Activated T-helper 2 cell treated with anti-CD3 and anti-CD28 coated beads, Interferon-gamma antibody, Interleukin-2, Interleukin-4, amounts not matched to agents 10 μg/mL and 5 μg/mL and 100 μg/mL, durations not matched to agents 14 hours and 24 hours and 36 hours (primary cell): ENCODE measurements at regions of chr14 and their contacts with region 1.

Region 1: DNA sequence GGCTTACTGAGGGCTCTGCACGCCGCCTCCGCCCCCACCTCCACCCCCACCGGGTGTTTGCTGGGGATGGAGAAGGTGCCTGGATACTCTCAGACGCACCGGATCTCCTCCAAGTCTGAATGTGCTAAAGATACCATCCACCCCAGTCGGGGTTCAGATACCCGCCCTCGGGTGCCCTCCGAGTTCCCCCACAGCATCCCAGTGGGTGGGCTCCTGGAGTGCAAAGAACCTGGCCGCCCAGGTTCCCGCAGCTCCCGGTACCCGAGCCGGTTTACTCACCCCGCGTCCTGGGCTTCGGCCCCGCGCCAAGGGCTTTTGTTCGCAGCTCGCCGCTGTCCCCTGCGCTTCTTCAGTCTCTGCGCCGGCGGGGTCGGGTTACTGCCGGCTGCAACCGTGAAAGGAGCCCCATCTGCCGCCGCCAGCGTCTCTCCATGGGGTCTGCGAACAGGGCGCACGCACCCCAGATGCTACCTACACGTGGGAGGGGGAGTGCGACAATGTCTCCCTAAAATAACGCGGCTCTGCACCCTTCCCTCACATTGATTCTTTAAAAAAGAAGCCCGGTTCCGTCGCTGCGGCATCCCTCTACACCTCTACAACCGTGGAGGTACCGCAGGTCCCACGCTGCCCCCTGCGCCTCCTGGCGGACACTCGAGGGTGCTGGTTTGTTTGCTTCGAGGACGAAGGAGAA is at the start of gene CCDC177:
- DNase-seq: peak; percentile 60
- H3K4me3 Mint-ChIP-seq: peak within 1 kb of the TSS; percentile 71
- H3K27ac Mint-ChIP-seq: no peak within 1 kb of the TSS
- H3K4me1 Mint-ChIP-seq: peaks cover 9% of the 10 kb centered on the region
- H3K27me3 Mint-ChIP-seq: peaks cover 60% of the 10 kb centered on the region
- total RNA-seq, gene CCDC177: 0.05 TPM in 1 of 2 replicates, not detected in the other

Region 2: DNA sequence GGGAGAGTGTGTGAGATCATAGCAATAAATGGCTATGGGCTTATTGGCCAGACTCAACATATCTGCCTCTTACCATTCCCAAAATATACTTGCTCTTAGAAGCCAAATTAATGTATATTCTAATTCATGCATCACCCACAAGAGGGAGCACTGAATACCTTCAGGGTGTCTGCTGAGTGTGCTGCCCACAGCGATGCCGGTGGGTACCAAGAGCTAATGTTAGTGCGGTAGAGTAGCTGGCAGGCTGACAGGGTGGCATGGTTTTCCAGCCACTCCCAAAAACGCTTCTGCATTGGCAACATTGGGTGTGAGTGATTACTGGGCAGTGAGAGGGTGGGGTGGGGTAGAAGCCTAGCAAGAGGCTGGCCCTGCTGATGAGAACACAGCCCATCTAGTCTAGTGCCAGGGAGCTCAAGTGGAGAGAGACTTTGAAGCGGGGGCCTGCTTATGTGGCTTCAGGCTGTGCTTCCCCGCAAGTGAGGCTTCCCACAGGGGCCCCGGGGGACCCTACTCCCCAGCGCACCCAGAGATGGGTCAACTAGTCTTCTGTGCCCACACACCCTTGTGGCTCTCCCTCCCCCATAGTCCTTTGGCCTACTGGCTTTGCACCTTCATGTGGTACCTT is 99.1 kb before region 1 on chr14:
- intact Hi-C with region 1: loop called (anchors 10 kb)
- DNase-seq: no peak
- H3K4me3 Mint-ChIP-seq: no peak overlapping the region
- H3K27ac Mint-ChIP-seq: no peak overlapping the region
- H3K4me1 Mint-ChIP-seq: no peaks in the 10 kb centered on the region
- H3K27me3 Mint-ChIP-seq: peaks cover 5% of the 10 kb centered on the region

Region 3: GRCh38 chr14:69535230-69535848 is 39.1 kb before region 1 on chr14:
- intact Hi-C with region 1: loop called (anchors 5 kb)
- DNase-seq: no peak
- H3K4me3 Mint-ChIP-seq: no peak overlapping the region
- H3K27ac Mint-ChIP-seq: no peak overlapping the region
- H3K4me1 Mint-ChIP-seq: no peaks in the 10 kb centered on the region
- H3K27me3 Mint-ChIP-seq: peaks cover 23% of the 10 kb centered on the region